Endothelial cell of umbilical vein (primary cell): ENCODE measurements at regions of chr3 and their contacts with region 1.

Region 1: DNA sequence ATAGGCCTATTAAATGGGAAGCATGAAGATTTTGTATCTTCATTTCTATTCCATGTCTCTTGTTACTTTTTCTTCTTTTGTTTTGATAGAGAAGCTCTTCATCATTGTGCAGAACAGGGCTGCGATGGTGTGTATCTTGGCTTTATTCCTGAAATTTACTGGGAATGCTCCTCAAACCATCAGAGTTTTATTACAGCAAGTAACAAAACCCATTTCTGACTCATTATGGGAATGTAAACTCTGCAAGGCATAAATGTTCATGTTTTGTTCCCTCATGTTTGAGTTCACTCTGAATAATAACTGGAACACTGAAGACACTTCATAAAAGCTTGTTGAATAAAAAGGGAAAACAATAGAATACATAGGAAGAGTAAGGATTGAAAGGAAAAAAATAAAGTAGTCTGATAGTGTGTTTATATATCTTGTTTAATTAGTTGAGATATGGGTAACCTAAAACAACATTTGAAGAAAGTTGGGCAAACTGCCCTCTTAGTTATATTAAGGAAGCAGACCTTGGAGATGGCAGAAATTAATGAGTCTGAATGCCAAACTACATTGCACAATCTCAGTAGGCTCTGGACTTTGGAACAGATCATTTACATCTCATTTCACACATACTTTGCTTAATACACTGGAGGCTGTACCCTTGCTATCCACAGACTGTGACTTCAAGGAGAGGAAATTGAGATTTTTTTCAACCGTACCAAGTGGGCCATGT is 521.5 kb downstream of the GRM7 start:
- DNase-seq: peak; percentile 98
- H3K4me3 ChIP-seq: no peak overlapping the region
- H3K27ac ChIP-seq: peak overlapping the region; percentile 57
- H3K4me1 ChIP-seq: peaks cover 18% of the 10 kb centered on the region
- H3K27me3 ChIP-seq: no peaks in the 10 kb centered on the region
- CTCF ChIP-seq: no peak
- POLR2A ChIP-seq: no peak

Region 2: GRCh38 chr3:6156386-6156785 is 1226.1 kb before region 1 on chr3:
- CTCF ChIA-PET with region 1: no interaction called
- POLR2A ChIA-PET with region 1: no interaction called
- dilution Hi-C with region 1: no loop called
- intact Hi-C with region 1: no loop called
- DNase-seq: no peak
- H3K4me3 ChIP-seq: no peak overlapping the region
- H3K27ac ChIP-seq: no peak overlapping the region
- H3K4me1 ChIP-seq: no peaks in the 10 kb centered on the region
- H3K27me3 ChIP-seq: no peaks in the 10 kb centered on the region
- CTCF ChIP-seq: no peak
- POLR2A ChIP-seq: no peak

Region 3: DNA sequence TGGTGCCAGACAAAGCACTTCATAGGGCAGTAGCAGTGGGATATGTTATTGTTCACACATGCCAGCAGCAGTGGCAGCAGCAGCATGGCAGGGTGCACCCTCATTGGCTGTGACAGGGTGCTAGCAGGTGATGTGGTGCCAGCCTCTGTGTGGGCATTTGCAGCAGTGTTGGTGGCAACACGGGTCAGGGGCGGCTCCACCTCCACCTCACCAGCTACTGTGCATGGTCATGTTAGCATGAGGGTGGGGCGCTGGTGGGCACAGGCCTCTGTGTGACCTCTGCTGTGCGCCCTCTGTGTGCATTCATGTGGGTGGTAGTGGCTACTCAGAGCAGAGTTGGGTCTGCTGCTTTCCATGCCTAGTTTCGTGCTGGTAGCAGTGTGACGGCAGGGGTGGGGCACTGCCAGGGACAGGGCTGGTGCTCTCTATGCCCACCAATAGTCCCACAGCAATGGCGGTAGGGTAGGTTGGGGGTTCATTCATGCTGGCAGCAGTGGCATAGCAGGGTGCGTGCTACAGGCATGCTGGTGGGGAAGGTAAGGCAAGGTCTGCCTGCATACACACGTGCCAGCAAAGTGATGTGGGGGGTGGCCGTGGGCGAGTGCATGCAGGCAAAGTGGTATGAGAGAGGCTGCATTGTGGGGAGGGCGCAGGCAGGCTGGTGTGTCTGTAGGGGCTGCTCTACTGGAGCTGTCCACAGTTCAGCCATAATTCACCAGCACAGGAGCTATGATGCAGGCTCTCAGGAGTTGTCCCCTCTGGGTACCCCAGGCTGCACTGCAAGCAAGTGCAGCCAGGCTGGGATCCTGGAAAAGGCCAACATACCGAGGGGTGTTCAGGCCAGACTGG is 118.9 kb before region 1 on chr3:
- CTCF ChIA-PET with region 1: no interaction called
- POLR2A ChIA-PET with region 1: no interaction called
- dilution Hi-C with region 1: no loop called
- intact Hi-C with region 1: no loop called
- DNase-seq: no peak
- H3K4me3 ChIP-seq: no peak overlapping the region
- H3K27ac ChIP-seq: no peak overlapping the region
- H3K4me1 ChIP-seq: no peaks in the 10 kb centered on the region
- H3K27me3 ChIP-seq: no peaks in the 10 kb centered on the region
- CTCF ChIP-seq: no peak
- POLR2A ChIP-seq: no peak

Region 4: DNA sequence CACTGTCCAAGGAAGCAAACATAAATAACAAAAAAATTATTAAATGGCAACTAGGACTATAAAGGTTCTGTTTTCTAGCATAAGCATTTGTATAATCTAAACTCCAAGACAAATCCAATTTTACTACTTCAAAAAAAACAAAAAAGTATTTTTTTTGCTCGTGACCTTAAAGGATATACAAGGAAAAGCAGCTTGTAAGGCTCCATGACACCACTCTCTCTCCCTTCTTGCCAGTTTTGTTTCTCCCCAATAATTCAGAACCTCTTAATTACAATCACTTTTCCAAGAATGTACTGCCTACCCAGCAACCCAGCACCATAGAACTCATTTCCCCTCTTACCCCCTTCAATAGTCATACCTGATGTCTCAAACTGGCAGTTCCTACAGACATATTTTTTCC is 25.4 kb before region 1 on chr3:
- CTCF ChIA-PET with region 1: no interaction called
- POLR2A ChIA-PET with region 1: no interaction called
- dilution Hi-C with region 1: no loop called
- intact Hi-C with region 1: no loop called
- DNase-seq: no peak
- H3K4me3 ChIP-seq: no peak overlapping the region
- H3K27ac ChIP-seq: no peak overlapping the region
- H3K4me1 ChIP-seq: no peaks in the 10 kb centered on the region
- H3K27me3 ChIP-seq: no peaks in the 10 kb centered on the region
- CTCF ChIP-seq: no peak
- POLR2A ChIP-seq: no peak

Region 5: DNA sequence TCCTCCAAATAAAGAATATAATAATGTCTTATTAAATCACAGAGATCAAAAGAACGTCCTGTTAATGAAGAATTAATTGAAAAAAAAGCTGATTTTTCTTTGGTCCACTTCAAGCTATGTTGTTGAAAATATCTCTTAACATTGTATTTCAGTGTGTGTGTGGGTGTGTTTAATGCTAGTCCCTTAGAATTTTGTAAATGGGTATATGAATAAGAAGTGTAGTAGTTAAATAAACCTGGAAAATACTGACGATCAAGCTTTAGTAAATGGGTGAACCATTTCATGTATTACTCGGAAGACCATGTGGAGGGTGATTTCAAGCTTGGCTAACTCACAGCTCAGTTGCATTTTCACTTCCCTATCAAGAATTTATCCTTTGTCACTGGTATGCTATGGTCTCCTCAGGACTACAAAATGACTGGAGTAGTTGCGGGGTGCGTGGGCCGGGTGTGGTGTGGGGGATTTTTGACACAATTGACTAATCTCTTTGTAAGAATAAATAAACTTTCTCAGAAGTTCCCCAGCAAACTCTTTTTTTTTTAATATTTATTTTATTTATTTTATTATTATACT is 64.8 kb after region 1 on chr3:
- CTCF ChIA-PET with region 1: no interaction called
- POLR2A ChIA-PET with region 1: no interaction called
- dilution Hi-C with region 1: no loop called
- intact Hi-C with region 1: loop called (anchors 5 kb)
- DNase-seq: no peak
- H3K4me3 ChIP-seq: no peak overlapping the region
- H3K27ac ChIP-seq: no peak overlapping the region
- H3K4me1 ChIP-seq: peaks cover 14% of the 10 kb centered on the region
- H3K27me3 ChIP-seq: no peaks in the 10 kb centered on the region
- CTCF ChIP-seq: no peak
- POLR2A ChIP-seq: no peak

Region 6: GRCh38 chr3:7546253-7546652 is 163.8 kb after region 1 on chr3:
- CTCF ChIA-PET with region 1: no interaction called
- POLR2A ChIA-PET with region 1: no interaction called
- dilution Hi-C with region 1: no loop called
- intact Hi-C with region 1: loop called (anchors 5 kb)
- DNase-seq: peak; percentile 79
- H3K4me3 ChIP-seq: no peak overlapping the region
- H3K27ac ChIP-seq: no peak overlapping the region
- H3K4me1 ChIP-seq: no peaks in the 10 kb centered on the region
- H3K27me3 ChIP-seq: no peaks in the 10 kb centered on the region
- CTCF ChIP-seq: peak; percentile 6 to 13
- POLR2A ChIP-seq: no peak

Region 7: GRCh38 chr3:7682822-7683229 is 300.4 kb after region 1 on chr3:
- CTCF ChIA-PET with region 1: no interaction called
- POLR2A ChIA-PET with region 1: no interaction called
- dilution Hi-C with region 1: no loop called
- intact Hi-C with region 1: loop called (anchors 1 kb)
- DNase-seq: peak; percentile 97
- H3K4me3 ChIP-seq: no peak overlapping the region
- H3K27ac ChIP-seq: peak overlapping the region; percentile 67
- H3K4me1 ChIP-seq: peaks cover 21% of the 10 kb centered on the region
- H3K27me3 ChIP-seq: no peaks in the 10 kb centered on the region
- CTCF ChIP-seq: no peak
- POLR2A ChIP-seq: no peak